Left ventricle myocardium inferior (tissue), 1 donor: ENCODE measurements at regions of chr4 and their contacts with region 1.

Region 1: GRCh38 chr4:73729534-73730165 is 10.7 kb upstream of the CXCL8 start:
- DNase-seq: peak; percentile 62
- H3K4me3 ChIP-seq: no peak overlapping the region
- H3K27ac ChIP-seq: peak overlapping the region; percentile 39
- H3K4me1 ChIP-seq: peaks cover 40% of the 10 kb centered on the region
- H3K27me3 ChIP-seq: no peaks in the 10 kb centered on the region
- CTCF ChIP-seq: peak; percentile 91

Region 2: GRCh38 chr4:73869130-73870050 is 139.7 kb after region 1 on chr4 and contains the start of gene CXCL1:
- intact Hi-C with region 1: loop called (anchors 10 kb)
- DNase-seq: peak; percentile 58
- H3K4me3 ChIP-seq: peak within 1 kb of the TSS; percentile 75
- H3K27ac ChIP-seq: peak within 1 kb of the TSS; percentile 74
- H3K4me1 ChIP-seq: peaks cover 18% of the 10 kb centered on the region
- H3K27me3 ChIP-seq: peaks cover 24% of the 10 kb centered on the region
- CTCF ChIP-seq: no peak
- total RNA-seq, gene CXCL1: 0.55 TPM

Region 3: GRCh38 chr4:74133786-74134499 is 404.3 kb after region 1 on chr4:
- intact Hi-C with region 1: loop called (anchors 5 kb)
- DNase-seq: peak; percentile 48
- H3K4me3 ChIP-seq: no peak overlapping the region
- H3K27ac ChIP-seq: peak overlapping the region; percentile 1
- H3K4me1 ChIP-seq: peaks cover 5% of the 10 kb centered on the region
- H3K27me3 ChIP-seq: no peaks in the 10 kb centered on the region
- CTCF ChIP-seq: peak; percentile 87

Region 4: GRCh38 chr4:74283614-74284013 is 554.0 kb after region 1 on chr4:
- intact Hi-C with region 1: no loop called
- DNase-seq: no peak
- H3K4me3 ChIP-seq: no peak overlapping the region
- H3K27ac ChIP-seq: no peak overlapping the region
- H3K4me1 ChIP-seq: no peaks in the 10 kb centered on the region
- H3K27me3 ChIP-seq: no peaks in the 10 kb centered on the region
- CTCF ChIP-seq: no peak